Common myeloid progenitor, CD34-positive (primary cell): ENCODE measurements at regions of chr14 and their contacts with region 1.

Region 1: GRCh38 chr14:56422703-56423213 is 156.8 kb upstream of the TMEM260 start:
- DNase-seq: peak; percentile 64 to 79 (median 78)
- H3K4me3 ChIP-seq: no peak overlapping the region
- H3K27ac ChIP-seq: no peak overlapping the region
- H3K4me1 ChIP-seq: peaks cover 9 to 37% (median 24%) of the 10 kb centered on the region in 4 experiments
- H3K27me3 ChIP-seq: no peaks in the 10 kb centered on the region

Region 2: GRCh38 chr14:56390859-56391258 is 31.9 kb before region 1 on chr14:
- CTCF ChIA-PET with region 1: interaction called, 27 read pairs
- POLR2A ChIA-PET with region 1: no interaction called
- DNase-seq: peak; percentile 31 to 62 (median 53)
- H3K4me3 ChIP-seq: no peak overlapping the region
- H3K27ac ChIP-seq: no peak overlapping the region
- H3K4me1 ChIP-seq: no peaks in the 10 kb centered on the region
- H3K27me3 ChIP-seq: no peaks in the 10 kb centered on the region

Region 3: GRCh38 chr14:56534656-56535055 is 111.9 kb after region 1 on chr14:
- CTCF ChIA-PET with region 1: no interaction called
- POLR2A ChIA-PET with region 1: no interaction called
- DNase-seq: no peak
- H3K4me3 ChIP-seq: no peak overlapping the region
- H3K27ac ChIP-seq: no peak overlapping the region
- H3K4me1 ChIP-seq: no peaks in the 10 kb centered on the region
- H3K27me3 ChIP-seq: peaks cover 0 to 4% (median 0%) of the 10 kb centered on the region in 5 experiments